Activated T-helper 2 cell treated with anti-CD3 and anti-CD28 coated beads, Interferon-gamma antibody, Interleukin-2, Interleukin-4, amounts not matched to agents 10 μg/mL and 5 μg/mL and 100 μg/mL, durations not matched to agents 14 hours and 24 hours and 36 hours (primary cell): ENCODE measurements at regions of chr7 and their contacts with region 1.

Region 1: DNA sequence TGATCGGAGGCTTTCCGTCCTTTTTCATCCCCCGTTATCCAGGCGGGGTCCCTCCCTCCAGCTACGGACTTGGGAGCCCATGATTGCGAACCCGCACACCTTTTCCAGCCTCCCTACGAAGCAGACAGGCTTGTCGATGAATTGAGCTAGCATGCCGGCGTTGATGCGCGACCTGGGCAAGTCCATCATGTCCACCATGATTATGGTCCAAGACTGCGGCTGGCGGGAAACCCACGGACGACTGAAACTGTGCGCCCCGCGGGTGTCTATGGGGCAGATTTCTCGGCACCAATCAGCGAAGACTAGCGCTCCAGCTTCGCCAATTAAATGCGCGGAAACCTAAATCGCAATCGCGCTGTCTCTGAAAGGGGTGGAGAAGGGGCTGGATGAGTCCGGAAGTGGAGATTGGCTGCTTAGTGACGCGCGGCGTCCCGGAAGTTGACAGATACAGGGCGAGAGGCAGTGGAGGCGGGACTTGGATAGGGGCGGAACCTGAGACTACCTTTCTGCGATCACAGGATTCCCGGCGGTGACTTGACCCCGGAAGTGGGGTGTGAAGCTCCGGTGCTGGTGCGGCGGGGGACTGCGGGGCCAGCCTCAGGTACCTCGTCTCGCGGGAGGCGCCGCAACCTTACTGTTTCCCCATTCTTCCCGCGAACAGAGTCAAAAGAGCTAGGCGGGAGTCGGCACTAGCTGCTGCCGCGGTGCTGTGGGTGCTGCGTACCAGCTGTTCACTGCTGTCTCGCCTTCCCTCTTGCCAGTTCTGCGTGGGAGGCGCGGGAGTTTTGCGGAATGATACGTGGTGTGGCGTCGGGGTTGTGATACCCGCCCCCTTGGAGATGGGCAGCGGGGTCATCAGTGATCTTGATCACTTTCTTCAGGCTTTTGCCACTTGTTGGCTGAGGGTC is at the start of gene UMAD1:
- DNase-seq: peak; percentile 99
- H3K4me3 Mint-ChIP-seq: peak within 1 kb of the TSS; percentile 94
- H3K27ac Mint-ChIP-seq: peak within 1 kb of the TSS; percentile 99
- H3K4me1 Mint-ChIP-seq: peaks cover 31% of the 10 kb centered on the region
- H3K27me3 Mint-ChIP-seq: no peaks in the 10 kb centered on the region
- total RNA-seq, gene UMAD1: 16.0 and 18.9 TPM in 2 replicates

Region 2: DNA sequence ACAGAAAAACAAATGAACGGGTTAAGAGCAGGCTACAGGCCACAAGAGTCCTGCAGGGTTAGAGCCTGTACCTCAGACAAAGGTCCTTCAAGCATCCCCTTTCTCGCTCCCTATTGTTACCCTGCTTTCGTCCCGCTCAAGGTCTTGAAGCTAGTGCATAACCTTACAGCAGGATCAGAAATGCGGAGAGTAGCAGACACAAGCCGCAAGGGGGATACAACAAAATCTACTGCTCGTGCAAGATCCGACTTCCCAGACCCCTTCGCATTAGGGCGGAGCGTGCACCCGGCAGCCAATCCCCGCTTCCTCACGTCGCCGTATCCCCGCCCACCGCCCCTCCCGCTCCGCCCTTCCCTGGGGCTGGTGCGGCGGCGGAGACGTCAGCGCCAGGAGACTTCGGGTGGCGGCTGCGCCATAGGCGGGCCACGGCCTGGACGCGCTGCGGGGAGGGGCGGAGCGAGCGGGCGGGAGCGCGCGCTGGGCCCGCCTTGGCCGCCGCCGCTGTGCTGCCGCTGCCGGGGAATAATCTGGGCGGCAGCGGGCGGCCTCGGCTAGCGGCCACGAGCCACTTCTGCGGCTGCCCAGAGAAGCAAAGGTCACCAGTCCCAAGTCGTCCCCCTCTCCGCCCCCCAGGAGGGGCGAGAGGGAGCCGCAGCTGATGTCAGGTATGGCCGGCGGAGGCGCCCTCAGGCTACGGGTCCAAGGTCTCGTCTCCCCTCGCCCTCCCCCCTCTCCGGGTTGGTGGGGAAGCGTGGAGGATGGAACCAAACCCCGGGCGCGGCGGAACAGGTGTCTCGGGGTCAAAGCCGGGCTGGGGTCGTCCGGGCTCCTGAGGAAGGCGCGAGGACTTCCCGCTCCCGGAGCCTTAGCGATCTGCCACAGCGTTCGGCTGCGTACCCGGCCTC is 458.1 kb before region 1 on chr7 and contains the start of gene C1GALT1:
- intact Hi-C with region 1: loop called (anchors 1 kb)
- DNase-seq: peak; percentile 95
- H3K4me3 Mint-ChIP-seq: peak within 1 kb of the TSS; percentile 95
- H3K27ac Mint-ChIP-seq: peak within 1 kb of the TSS; percentile 99
- H3K4me1 Mint-ChIP-seq: peaks cover 22% of the 10 kb centered on the region
- H3K27me3 Mint-ChIP-seq: no peaks in the 10 kb centered on the region
- total RNA-seq, gene C1GALT1: 37.1 and 37.6 TPM in 2 replicates

Region 3: DNA sequence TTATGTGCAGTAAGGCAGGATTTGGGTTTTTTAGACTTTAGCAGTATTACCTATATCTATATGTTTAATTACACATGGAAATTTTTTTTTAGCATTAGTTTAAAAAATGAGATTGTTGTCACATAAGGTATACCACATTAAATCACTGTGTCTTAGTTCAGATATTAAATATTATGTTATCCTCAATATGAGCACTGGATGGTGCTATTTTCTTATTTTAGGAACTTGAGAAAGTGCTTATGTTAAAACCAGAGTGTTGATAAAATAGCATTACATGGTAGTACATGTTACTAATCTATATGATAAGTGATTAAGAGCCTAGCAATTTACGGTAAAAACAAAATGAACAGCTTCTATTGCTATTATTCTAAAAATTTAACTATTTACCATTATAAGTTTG is 45.0 kb before region 1 on chr7:
- intact Hi-C with region 1: loop called (anchors 5 kb)
- DNase-seq: no peak
- H3K4me3 Mint-ChIP-seq: no peak overlapping the region
- H3K27ac Mint-ChIP-seq: no peak overlapping the region
- H3K4me1 Mint-ChIP-seq: peaks cover 2% of the 10 kb centered on the region
- H3K27me3 Mint-ChIP-seq: no peaks in the 10 kb centered on the region

Region 4: DNA sequence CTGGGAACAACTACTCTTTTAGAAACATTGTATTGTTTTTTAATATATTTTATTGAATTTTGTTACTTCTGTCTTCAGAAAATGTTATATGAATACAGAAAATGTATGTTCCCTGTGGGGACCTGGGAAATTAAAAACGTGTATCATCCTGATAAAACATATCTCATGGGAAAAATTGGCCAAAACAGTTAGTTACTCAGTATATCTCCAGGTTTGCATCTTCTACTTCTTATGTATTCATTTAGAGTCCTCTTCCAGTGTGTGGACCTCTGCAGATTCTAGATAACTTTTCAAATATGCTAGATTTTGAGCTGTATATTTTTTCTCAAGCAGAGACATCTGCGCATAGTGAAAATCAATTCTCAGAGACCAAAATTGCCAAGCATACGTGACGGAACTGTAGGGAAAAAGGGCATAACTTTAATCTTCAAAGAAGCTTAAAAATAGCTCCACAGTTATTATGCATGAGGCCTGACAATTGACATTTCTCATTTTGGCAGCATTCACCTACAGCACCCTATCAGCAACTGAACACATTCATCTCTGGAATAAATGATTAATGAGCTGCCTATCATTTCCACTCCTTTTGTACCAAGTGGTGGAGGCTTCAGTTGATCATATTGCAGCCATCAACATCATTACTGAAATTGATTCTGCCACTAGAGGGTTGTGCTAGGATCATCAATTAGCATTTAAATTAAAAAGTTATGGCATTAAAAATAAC is 26.3 kb before region 1 on chr7:
- intact Hi-C with region 1: no loop called
- DNase-seq: no peak
- H3K4me3 Mint-ChIP-seq: no peak overlapping the region
- H3K27ac Mint-ChIP-seq: no peak overlapping the region
- H3K4me1 Mint-ChIP-seq: peaks cover 5% of the 10 kb centered on the region
- H3K27me3 Mint-ChIP-seq: peaks cover 5% of the 10 kb centered on the region

Region 5: DNA sequence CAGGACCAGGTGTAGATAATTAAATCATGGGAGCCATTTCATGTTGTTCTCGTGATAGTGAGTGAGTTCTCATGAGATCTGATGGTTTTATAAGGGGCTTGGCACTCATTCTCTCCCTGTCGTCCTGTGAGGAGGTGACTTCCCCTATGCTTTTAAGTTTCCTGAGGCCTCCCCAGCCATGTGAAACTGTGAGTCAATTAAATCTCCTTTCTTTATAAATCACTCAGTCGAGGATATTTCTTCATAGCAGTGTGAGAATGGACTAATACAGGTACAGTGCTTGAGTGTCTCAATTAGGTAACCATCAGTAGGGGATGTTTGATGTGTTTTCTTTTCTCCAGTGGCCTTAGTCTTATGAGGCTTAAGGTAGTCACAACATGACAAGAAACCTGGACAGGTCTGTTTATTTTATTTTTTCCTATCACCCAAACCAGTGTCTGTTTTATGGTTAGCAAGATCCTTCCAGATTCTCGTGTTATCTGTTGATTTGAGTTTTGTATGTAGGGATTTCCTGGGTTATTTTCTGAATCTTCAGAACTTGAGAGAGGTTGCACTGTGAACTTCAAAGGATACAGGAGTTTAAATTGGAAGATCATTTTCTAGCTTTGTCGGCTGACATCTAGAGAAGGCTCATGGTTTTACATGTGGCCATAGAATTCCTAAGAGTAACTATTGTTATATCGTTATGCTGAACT is 32.2 kb after region 1 on chr7:
- intact Hi-C with region 1: loop called (anchors 1 kb)
- DNase-seq: no peak
- H3K4me3 Mint-ChIP-seq: peak overlapping the region; percentile 11
- H3K27ac Mint-ChIP-seq: peak overlapping the region; percentile 88
- H3K4me1 Mint-ChIP-seq: peaks cover 31% of the 10 kb centered on the region
- H3K27me3 Mint-ChIP-seq: no peaks in the 10 kb centered on the region

Region 6: GRCh38 chr7:7693881-7694280 is 53.4 kb after region 1 on chr7:
- intact Hi-C with region 1: no loop called
- DNase-seq: no peak
- H3K4me3 Mint-ChIP-seq: no peak overlapping the region
- H3K27ac Mint-ChIP-seq: no peak overlapping the region
- H3K4me1 Mint-ChIP-seq: peaks cover 5% of the 10 kb centered on the region
- H3K27me3 Mint-ChIP-seq: no peaks in the 10 kb centered on the region

Region 7: DNA sequence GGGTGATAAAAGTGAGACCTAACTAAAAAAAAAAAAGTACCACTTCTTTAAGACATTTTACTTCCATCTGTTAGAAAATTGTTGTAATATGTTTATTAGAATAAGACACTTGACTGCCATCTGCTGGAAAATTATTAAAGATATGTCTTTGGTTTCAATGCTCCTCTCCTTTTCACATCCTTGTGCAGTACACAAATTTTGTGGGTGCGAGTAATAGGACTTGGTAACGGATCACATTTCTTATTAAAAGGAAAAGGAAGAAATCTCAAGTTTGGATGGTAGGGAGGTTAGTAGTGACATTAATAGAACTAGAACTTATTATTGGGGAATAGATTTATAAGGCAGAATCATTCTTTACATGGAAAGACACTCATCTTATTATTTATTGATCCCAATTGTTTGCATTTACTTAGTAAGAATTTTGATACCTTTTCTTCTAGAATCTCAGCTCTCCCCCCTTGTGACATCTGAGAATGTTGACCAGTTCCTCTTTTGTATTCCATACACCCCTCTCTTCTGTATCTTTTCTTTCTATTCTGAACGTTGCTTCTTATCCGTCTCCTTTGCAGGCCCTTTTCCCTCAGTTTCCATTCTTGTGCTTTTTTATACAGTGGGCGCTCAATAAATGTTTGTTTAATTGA is 121.0 kb after region 1 on chr7:
- intact Hi-C with region 1: loop called (anchors 1 kb)
- DNase-seq: no peak
- H3K4me3 Mint-ChIP-seq: peak overlapping the region; percentile 86
- H3K27ac Mint-ChIP-seq: peak overlapping the region; percentile 83
- H3K4me1 Mint-ChIP-seq: peaks cover 38% of the 10 kb centered on the region
- H3K27me3 Mint-ChIP-seq: no peaks in the 10 kb centered on the region

Region 8: GRCh38 chr7:8134089-8134733 is 493.7 kb after region 1 on chr7:
- intact Hi-C with region 1: loop called (anchors 2 kb)
- DNase-seq: peak; percentile 30
- H3K4me3 Mint-ChIP-seq: peak overlapping the region; percentile 1
- H3K27ac Mint-ChIP-seq: peak overlapping the region; percentile 87
- H3K4me1 Mint-ChIP-seq: peaks cover 61% of the 10 kb centered on the region
- H3K27me3 Mint-ChIP-seq: no peaks in the 10 kb centered on the region

Region 9: DNA sequence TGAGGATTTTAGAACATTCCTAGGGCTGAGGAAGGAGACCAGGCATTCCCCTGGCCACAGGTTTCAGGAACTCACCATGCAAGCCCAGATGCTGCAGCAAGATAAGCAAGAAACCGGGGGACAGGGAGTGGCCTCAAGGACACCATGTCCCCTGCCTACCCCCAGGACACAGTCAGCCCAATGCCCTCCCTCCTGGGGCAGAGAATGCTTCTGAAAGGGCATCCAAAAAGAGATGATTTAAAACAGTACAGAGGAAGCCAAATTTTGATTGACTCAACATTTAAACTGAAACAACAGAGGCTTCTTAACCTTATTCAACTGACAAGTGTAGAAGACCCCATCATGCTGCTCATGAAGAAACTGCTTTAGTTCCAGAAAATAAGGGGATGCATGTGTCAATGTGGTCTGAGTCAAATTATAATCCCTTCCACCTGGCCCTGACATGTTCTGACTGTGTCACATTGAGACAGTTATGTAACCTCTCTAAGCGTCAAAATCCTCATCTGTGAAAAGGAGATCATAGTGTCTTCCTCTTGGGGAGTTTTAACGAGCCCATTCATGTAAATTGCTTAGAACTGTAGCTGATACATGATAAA is 561.5 kb after region 1 on chr7:
- intact Hi-C with region 1: loop called (anchors 2 kb)
- DNase-seq: no peak
- H3K4me3 Mint-ChIP-seq: no peak overlapping the region
- H3K27ac Mint-ChIP-seq: peak overlapping the region; percentile 55
- H3K4me1 Mint-ChIP-seq: peaks cover 70% of the 10 kb centered on the region
- H3K27me3 Mint-ChIP-seq: peaks cover 6% of the 10 kb centered on the region